ENCODE measurements at regions of chr10 and their contacts with region 1.

Region 1: GRCh38 chr10:31759799-31760626 is 168.6 kb downstream of the ARHGAP12 start:
- DNase-seq: peak; percentile 90 to 98 (median 94)
- ATAC-seq: peak; percentile 93
- H3K4me3 ChIP-seq: peak overlapping the region; percentile 98 to 99
- H3K4me3 Mint-ChIP-seq: peak overlapping the region; percentile 88
- H3K27ac ChIP-seq: peak overlapping the region; percentile 92 to 95
- H3K27ac Mint-ChIP-seq: peak overlapping the region; percentile 97
- H3K4me1 ChIP-seq: peaks cover 8% of the 10 kb centered on the region
- H3K4me1 Mint-ChIP-seq: peaks cover 14% of the 10 kb centered on the region
- H3K27me3 ChIP-seq: no peaks in the 10 kb centered on the region
- H3K27me3 Mint-ChIP-seq: no peaks in the 10 kb centered on the region
- CTCF ChIP-seq: no peak

Region 2: GRCh38 chr10:30348378-30348776 is 1411.6 kb before region 1 on chr10:
- CTCF ChIA-PET with region 1: no interaction called
- POLR2A ChIA-PET with region 1: no interaction called
- intact Hi-C with region 1: loop called (anchors 10 kb)
- DNase-seq: no peak
- ATAC-seq: peak; percentile 16
- H3K4me3 ChIP-seq: peak overlapping the region; percentile 95 to 98
- H3K4me3 Mint-ChIP-seq: peak overlapping the region; percentile 91
- H3K27ac ChIP-seq: peak overlapping the region; percentile 79 to 84
- H3K27ac Mint-ChIP-seq: peak overlapping the region; percentile 95
- H3K4me1 ChIP-seq: peaks cover 38% of the 10 kb centered on the region
- H3K4me1 Mint-ChIP-seq: peaks cover 51% of the 10 kb centered on the region
- H3K27me3 ChIP-seq: no peaks in the 10 kb centered on the region
- H3K27me3 Mint-ChIP-seq: no peaks in the 10 kb centered on the region
- CTCF ChIP-seq: no peak

Region 3: GRCh38 chr10:30701451-30702173 is 1058.4 kb before region 1 on chr10:
- CTCF ChIA-PET with region 1: no interaction called
- POLR2A ChIA-PET with region 1: no interaction called
- intact Hi-C with region 1: loop called in 1 of 2 experiments (anchors 5 kb)
- DNase-seq: peak; percentile 41 to 92 (median 74)
- ATAC-seq: peak; percentile 70
- H3K4me3 ChIP-seq: peak overlapping the region; percentile 1 to 43
- H3K4me3 Mint-ChIP-seq: peak overlapping the region; percentile 78
- H3K27ac ChIP-seq: peak overlapping the region; percentile 48 to 81
- H3K27ac Mint-ChIP-seq: peak overlapping the region; percentile 95
- H3K4me1 ChIP-seq: peaks cover 74% of the 10 kb centered on the region
- H3K4me1 Mint-ChIP-seq: peaks cover 83% of the 10 kb centered on the region
- H3K27me3 ChIP-seq: no peaks in the 10 kb centered on the region
- H3K27me3 Mint-ChIP-seq: no peaks in the 10 kb centered on the region
- CTCF ChIP-seq: no peak

Region 4: GRCh38 chr10:31133628-31134302 is 626.2 kb before region 1 on chr10:
- CTCF ChIA-PET with region 1: no interaction called
- POLR2A ChIA-PET with region 1: no interaction called
- intact Hi-C with region 1: loop called in 1 of 2 experiments (anchors 2 kb)
- DNase-seq: peak; percentile 37 to 84 (median 68)
- ATAC-seq: peak; percentile 70
- H3K4me3 ChIP-seq: peak overlapping the region; percentile 67 to 71
- H3K4me3 Mint-ChIP-seq: peak overlapping the region; percentile 81
- H3K27ac ChIP-seq: peak overlapping the region; percentile 33 to 65
- H3K27ac Mint-ChIP-seq: peak overlapping the region; percentile 76
- H3K4me1 ChIP-seq: peaks cover 32% of the 10 kb centered on the region
- H3K4me1 Mint-ChIP-seq: peaks cover 37% of the 10 kb centered on the region
- H3K27me3 ChIP-seq: no peaks in the 10 kb centered on the region
- H3K27me3 Mint-ChIP-seq: no peaks in the 10 kb centered on the region
- CTCF ChIP-seq: no peak

Region 5: DNA sequence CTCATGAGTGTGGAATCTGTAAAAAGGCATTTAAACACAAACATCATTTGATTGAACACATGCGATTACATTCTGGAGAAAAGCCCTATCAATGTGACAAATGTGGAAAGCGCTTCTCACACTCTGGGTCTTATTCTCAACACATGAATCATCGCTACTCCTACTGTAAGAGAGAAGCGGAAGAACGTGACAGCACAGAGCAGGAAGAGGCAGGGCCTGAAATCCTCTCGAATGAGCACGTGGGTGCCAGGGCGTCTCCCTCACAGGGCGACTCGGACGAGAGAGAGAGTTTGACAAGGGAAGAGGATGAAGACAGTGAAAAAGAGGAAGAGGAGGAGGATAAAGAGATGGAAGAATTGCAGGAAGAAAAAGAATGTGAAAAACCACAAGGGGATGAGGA is 233.3 kb before region 1 on chr10:
- CTCF ChIA-PET with region 1: no interaction called
- POLR2A ChIA-PET with region 1: no interaction called
- intact Hi-C with region 1: loop called in 1 of 2 experiments (anchors 10 kb)
- DNase-seq: no peak
- ATAC-seq: no peak
- H3K4me3 ChIP-seq: no peak overlapping the region
- H3K4me3 Mint-ChIP-seq: no peak overlapping the region
- H3K27ac ChIP-seq: no peak overlapping the region
- H3K27ac Mint-ChIP-seq: peak overlapping the region; percentile 15
- H3K4me1 ChIP-seq: no peaks in the 10 kb centered on the region
- H3K4me1 Mint-ChIP-seq: no peaks in the 10 kb centered on the region
- H3K27me3 ChIP-seq: no peaks in the 10 kb centered on the region
- H3K27me3 Mint-ChIP-seq: no peaks in the 10 kb centered on the region
- CTCF ChIP-seq: no peak

Region 6: DNA sequence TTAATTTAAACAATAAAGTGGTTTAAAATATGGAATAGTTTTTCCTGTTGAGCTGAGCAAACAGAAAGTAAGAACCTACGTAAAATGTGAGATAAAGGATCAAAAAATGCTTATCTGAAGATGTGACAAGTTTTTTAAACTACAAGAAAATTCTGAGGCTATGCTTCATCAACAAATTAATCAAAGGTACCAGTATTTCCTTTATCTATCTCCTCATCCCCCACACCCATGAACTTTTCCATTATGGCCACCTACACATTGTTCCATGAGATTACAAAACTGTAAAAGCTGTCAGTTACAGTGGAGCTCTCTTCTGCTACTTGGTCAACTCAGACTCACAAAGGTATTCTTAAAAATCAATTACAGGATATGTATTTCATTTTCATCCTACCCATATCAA is 91.2 kb after region 1 on chr10:
- CTCF ChIA-PET with region 1: no interaction called
- POLR2A ChIA-PET with region 1: no interaction called
- intact Hi-C with region 1: no loop called
- DNase-seq: no peak
- ATAC-seq: no peak
- H3K4me3 ChIP-seq: no peak overlapping the region
- H3K4me3 Mint-ChIP-seq: no peak overlapping the region
- H3K27ac ChIP-seq: no peak overlapping the region
- H3K27ac Mint-ChIP-seq: no peak overlapping the region
- H3K4me1 ChIP-seq: no peaks in the 10 kb centered on the region
- H3K4me1 Mint-ChIP-seq: peaks cover 18% of the 10 kb centered on the region
- H3K27me3 ChIP-seq: no peaks in the 10 kb centered on the region
- H3K27me3 Mint-ChIP-seq: no peaks in the 10 kb centered on the region
- CTCF ChIP-seq: no peak

Region 7: DNA sequence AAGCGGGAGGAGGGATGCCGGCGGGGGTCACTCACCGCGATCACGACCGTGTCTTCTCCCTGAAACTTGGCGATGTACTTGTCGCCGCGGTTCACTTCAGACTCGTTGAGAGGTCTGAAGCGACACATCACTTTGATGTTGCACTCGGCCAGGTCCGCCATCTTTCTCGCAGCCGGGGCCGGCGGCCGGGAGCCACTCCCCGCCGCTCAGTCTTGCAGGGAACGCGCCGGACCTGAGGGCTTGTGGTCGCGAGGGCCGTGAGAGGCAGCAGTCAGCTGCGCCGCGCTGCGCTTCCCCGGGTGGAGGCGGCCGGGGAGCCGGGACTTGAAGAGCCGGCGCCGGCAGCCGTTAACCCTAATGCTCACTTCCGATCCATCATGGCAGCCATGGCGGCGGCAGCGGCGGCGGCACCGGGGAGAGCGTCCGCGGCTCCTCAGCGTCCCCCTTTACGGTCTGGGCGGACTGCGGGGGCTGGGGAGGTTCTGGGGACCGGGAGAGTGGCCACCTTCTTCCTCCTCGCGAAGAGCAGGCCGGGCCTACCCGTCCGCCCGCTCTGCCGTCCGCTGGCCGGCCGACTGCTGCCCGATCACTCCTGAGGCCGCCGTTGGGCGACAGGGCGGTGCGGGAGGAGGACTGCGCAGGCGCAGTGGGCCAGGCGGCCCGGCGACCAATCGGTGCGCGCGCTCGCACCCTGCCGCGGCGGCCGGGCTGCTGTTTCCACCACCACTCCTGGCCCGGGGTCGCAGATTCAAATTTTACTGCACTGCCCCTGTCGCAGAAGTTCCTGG is 296.0 kb after region 1 on chr10 and contains the start of gene KIF5B:
- CTCF ChIA-PET with region 1: no interaction called
- POLR2A ChIA-PET with region 1: no interaction called
- intact Hi-C with region 1: loop called (anchors 2 to 5 kb)
- DNase-seq: peak; percentile 69 to 93 (median 84)
- ATAC-seq: peak; percentile 79
- H3K4me3 ChIP-seq: peak within 1 kb of the TSS; percentile 74 to 89
- H3K4me3 Mint-ChIP-seq: peak within 1 kb of the TSS; percentile 96
- H3K27ac ChIP-seq: peak within 1 kb of the TSS; percentile 66 to 89
- H3K27ac Mint-ChIP-seq: peak within 1 kb of the TSS; percentile 94
- H3K4me1 ChIP-seq: peaks cover 41% of the 10 kb centered on the region
- H3K4me1 Mint-ChIP-seq: peaks cover 51% of the 10 kb centered on the region
- H3K27me3 ChIP-seq: no peaks in the 10 kb centered on the region
- H3K27me3 Mint-ChIP-seq: no peaks in the 10 kb centered on the region
- CTCF ChIP-seq: no peak
- total RNA-seq, gene KIF5B: 53.2 to 53.8 TPM

Measured in CD8-positive, alpha-beta T cell (primary cell).